Prostate gland (tissue), 2 donors: ENCODE measurements at regions of chr15 and their contacts with region 1.

Region 1: GRCh38 chr15:84929744-84930371 is 45.4 kb downstream of the SLC28A1 start:
- DNase-seq: peak; percentile 15
- H3K4me3 ChIP-seq: no peak overlapping the region
- H3K27ac ChIP-seq: no peak overlapping the region
- H3K4me1 ChIP-seq: no peaks in the 10 kb centered on the region
- H3K27me3 ChIP-seq: no peaks in the 10 kb centered on the region
- CTCF ChIP-seq: no peak
- POLR2A ChIP-seq: peak; percentile 31

Region 2: DNA sequence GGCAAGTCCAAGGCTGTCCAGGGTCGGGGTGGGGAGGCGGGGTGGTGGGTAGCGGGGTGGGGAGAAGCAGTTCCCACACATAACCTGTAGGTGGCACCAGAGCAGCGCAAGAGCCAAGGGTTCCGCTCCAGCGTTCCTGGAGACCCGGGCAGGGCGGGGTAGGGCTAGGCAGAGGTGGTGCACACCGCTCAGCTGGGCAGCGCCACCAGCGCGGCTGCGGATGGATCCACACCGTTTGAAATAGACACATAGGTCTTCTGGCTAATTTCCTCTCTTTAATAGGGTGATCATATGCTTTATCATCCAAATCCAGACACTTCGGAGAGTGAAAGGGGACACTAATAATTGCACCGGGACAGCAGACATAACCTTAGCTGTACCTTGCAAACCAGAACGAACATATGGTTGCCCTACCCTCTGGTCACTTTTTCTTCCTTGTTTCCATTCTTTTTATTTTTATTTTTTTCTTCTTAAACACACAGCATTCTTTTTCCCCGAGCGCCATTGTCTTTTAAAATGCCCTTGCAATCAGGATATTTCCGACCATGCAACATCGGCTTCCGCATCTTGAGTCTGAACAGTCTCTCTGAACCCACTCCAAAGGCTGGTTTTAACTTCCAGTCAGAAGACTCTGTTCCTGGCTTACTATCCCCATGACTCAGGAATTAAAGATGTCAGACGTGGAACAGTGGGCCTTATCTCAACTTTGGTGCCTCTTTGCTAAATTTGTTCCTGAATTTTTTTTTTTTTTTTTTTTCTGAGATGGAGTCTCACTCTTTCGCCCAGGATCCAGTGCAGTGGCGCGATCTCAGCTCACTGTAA is 341.6 kb before region 1 on chr15:
- intact Hi-C with region 1: loop called (anchors 5 kb)
- DNase-seq: peak; percentile 82
- H3K4me3 ChIP-seq: peak overlapping the region; percentile 25 to 32
- H3K27ac ChIP-seq: no peak overlapping the region
- H3K4me1 ChIP-seq: no peaks in the 10 kb centered on the region
- H3K27me3 ChIP-seq: no peaks in the 10 kb centered on the region
- CTCF ChIP-seq: peak; percentile 68 to 84 (median 73)
- POLR2A ChIP-seq: no peak